Stomach (tissue), 19 donors: ENCODE measurements at regions of chr13 and their contacts with region 1.

Region 1: GRCh38 chr13:42110410-42111155 is 62.1 kb downstream of the DGKH start:
- DNase-seq: peak in 1 of 2 donors; percentile 88
- H3K4me3 ChIP-seq: no peak overlapping the region
- H3K27ac ChIP-seq: no peak overlapping the region
- H3K4me1 ChIP-seq: peaks cover 0 to 18% (median 7%) of the 10 kb centered on the region in 4 donors
- H3K27me3 ChIP-seq: no peaks in the 10 kb centered on the region
- CTCF ChIP-seq: peak in 5 of 7 experiments; percentile 58 to 88 (median 81)
- EP300 ChIP-seq: no peak
- POLR2A ChIP-seq: no peak

Region 2: DNA sequence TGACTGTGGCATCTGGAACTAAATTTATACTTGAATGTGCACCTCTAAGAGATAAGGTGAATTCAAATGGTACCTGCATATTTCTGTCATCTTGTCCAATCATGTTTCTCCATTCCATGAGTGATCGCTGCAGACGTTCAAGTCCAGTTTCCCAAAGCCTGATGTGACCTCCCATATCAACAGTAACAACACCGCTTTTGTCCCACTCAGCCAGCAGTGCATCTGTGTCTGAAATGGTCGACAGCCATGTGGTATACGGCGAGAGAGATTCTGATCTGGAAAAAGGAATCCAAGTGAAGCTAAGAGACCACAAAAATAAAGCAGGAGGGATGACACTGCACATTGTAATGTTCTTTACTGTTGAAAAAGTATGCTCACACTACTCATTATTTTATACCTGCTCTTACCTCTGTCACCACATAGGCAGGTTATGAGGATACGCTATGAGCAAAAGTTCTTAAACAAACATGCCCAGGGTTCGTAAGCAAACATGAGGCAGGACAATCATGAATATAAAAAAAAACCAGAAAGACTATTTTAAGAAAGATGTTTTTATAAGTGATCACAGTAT is 439.6 kb before region 1 on chr13:
- intact Hi-C with region 1: loop called (anchors 5 kb)
- DNase-seq: no peak
- H3K4me3 ChIP-seq: no peak overlapping the region
- H3K27ac ChIP-seq: no peak overlapping the region
- H3K4me1 ChIP-seq: peaks cover 0 to 33% (median 16%) of the 10 kb centered on the region in 4 donors
- H3K27me3 ChIP-seq: no peaks in the 10 kb centered on the region
- CTCF ChIP-seq: no peak
- EP300 ChIP-seq: no peak
- POLR2A ChIP-seq: no peak

Region 3: DNA sequence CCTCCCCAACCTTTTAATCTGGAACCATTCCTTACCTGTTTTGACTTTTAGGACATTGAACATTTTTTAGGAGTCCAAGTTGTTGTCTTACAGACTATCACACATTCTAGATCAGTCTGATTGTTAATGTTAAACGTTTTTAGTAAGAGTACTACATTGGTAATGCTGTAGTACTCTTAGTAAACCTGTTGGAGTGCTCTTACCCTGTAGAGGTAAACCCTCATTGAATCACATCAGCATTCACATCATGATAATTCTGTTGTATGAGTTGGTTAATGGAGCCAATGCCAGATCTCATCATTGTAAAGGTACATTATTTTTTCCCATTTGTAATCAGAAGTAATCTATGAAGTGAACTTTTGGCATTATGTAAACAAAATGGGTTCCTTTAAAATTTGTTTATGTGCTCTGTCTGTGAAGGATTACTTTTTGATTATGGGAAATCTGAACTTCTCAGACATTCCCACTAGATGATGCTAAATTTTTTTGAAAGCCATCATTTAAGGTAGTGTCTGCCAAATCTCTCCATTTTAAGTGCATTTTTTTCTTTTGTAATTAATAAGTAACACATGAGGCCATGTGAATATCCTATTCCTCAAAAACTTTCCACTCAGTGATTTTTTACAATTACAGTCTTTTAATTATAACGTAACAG is 204.9 kb before region 1 on chr13:
- intact Hi-C with region 1: loop called (anchors 10 kb)
- DNase-seq: peak in 1 of 2 donors; percentile 41
- H3K4me3 ChIP-seq: no peak overlapping the region
- H3K27ac ChIP-seq: no peak overlapping the region
- H3K4me1 ChIP-seq: no peaks in the 10 kb centered on the region
- H3K27me3 ChIP-seq: no peaks in the 10 kb centered on the region
- CTCF ChIP-seq: peak in 4 of 7 experiments; percentile 31 to 58 (median 44)
- EP300 ChIP-seq: no peak
- POLR2A ChIP-seq: no peak